HCT116 (cell line): ENCODE measurements at regions of chr1 and their contacts with region 1.

Region 1: GRCh38 chr1:235735621-235736020 is 86.0 kb upstream of the GNG4 start:
- DNase-seq: no peak
- ATAC-seq: no peak
- H3K4me3 ChIP-seq: no peak overlapping the region
- H3K27ac ChIP-seq: no peak overlapping the region
- H3K4me1 ChIP-seq: peaks cover 3 to 19% of the 10 kb centered on the region in 2 experiments
- H3K27me3 ChIP-seq: no peaks in the 10 kb centered on the region
- CTCF ChIP-seq: no peak
- POLR2A ChIP-seq: no peak
- RAD21 ChIP-seq: no peak

Region 2: GRCh38 chr1:235513495-235514366 is 221.9 kb before region 1 on chr1:
- CTCF ChIA-PET with region 1: interaction called, 3 read pairs
- POLR2A ChIA-PET with region 1: no interaction called
- RAD21 ChIA-PET with region 1: interaction called, 3 to 7 read pairs
- intact Hi-C with region 1: loop called (anchors 1 kb)
- DNase-seq: peak; percentile 59
- ATAC-seq: peak; percentile 72
- H3K4me3 ChIP-seq: no peak overlapping the region
- H3K27ac ChIP-seq: no peak overlapping the region
- H3K4me1 ChIP-seq: no peaks in the 10 kb centered on the region
- H3K27me3 ChIP-seq: no peaks in the 10 kb centered on the region
- CTCF ChIP-seq: peak; percentile 91 to 92 (median 91)
- POLR2A ChIP-seq: no peak
- RAD21 ChIP-seq: peak; percentile 92

Region 3: DNA sequence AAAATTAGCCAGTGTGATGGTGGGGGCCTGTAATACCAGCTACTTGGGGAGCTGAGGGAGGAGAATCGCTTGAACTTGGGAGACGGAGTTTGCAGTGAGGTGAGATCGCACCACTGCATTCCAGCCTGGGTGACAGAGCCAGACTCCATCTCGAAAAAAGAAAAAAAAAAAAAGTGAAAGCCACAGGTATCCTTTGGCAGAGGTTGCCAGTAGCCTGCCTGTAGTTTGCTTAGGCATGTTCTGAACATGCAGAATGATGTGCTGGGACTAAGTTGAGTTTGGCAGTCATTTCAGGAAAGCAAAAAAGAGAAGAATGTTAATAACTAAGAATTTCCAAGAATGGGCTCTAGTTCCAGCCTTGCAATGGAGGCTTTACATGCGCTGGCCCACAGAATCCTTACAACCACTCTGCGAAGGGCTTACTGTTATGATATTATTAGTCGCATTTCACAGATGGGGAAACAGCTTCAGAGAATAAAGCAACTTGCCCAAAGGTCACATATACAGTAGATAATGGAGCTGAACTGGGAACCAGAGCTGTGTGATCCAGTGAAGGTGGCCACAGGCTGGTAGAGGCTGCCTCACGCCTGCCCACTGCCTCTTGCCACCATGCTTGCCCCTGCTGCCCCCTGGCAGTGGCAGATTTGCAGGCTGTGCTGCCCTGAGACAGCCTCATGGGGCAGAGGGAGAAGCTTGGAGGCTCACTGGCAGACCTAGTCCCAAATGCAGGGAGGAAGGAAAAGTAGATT is 197.6 kb after region 1 on chr1:
- CTCF ChIA-PET with region 1: no interaction called
- POLR2A ChIA-PET with region 1: no interaction called
- RAD21 ChIA-PET with region 1: no interaction called
- intact Hi-C with region 1: no loop called
- DNase-seq: no peak
- ATAC-seq: peak; percentile 69; the same call in 1 of the 2 replicates
- H3K4me3 ChIP-seq: no peak overlapping the region
- H3K27ac ChIP-seq: no peak overlapping the region
- H3K4me1 ChIP-seq: peaks cover 0 to 2% of the 10 kb centered on the region in 2 experiments; a peak in 1 of 4 replicates
- H3K27me3 ChIP-seq: no peaks in the 10 kb centered on the region
- CTCF ChIP-seq: peak in 2 of 3 experiments; percentile 15 to 21; a peak in 2 of 6 replicates
- POLR2A ChIP-seq: no peak
- RAD21 ChIP-seq: peak; percentile 49

Region 4: GRCh38 chr1:235999259-235999925 is 263.8 kb after region 1 on chr1:
- CTCF ChIA-PET with region 1: no interaction called
- POLR2A ChIA-PET with region 1: no interaction called
- RAD21 ChIA-PET with region 1: no interaction called
- intact Hi-C with region 1: no loop called
- DNase-seq: peak; percentile 31
- ATAC-seq: peak; percentile 71
- H3K4me3 ChIP-seq: peak overlapping the region in 1 of 2 experiments; percentile 10; a peak in 2 of 4 replicates
- H3K27ac ChIP-seq: no peak overlapping the region
- H3K4me1 ChIP-seq: peaks cover 8 to 36% of the 10 kb centered on the region in 2 experiments
- H3K27me3 ChIP-seq: no peaks in the 10 kb centered on the region
- CTCF ChIP-seq: no peak
- POLR2A ChIP-seq: no peak
- RAD21 ChIP-seq: no peak